ENCODE measurements at regions of chr7 and their contacts with region 1.

Region 1: GRCh38 chr7:151028131-151028947 is at the start of gene ABCB8:
- DNase-seq: peak; percentile 96 to 99 (median 98)
- ATAC-seq: peak; percentile 96 to 98 (median 96)
- H3K4me3 ChIP-seq: peak within 1 kb of the TSS; percentile 62 to 91 (median 76)
- H3K27ac ChIP-seq: peak within 1 kb of the TSS; percentile 15 to 90 (median 85)
- H3K4me1 ChIP-seq: peaks cover 0 to 22% (median 15%) of the 10 kb centered on the region in 12 donors
- H3K27me3 ChIP-seq: peaks cover 0 to 4% (median 0%) of the 10 kb centered on the region in 9 donors
- CTCF ChIP-seq: peak; percentile 43 to 77 (median 60)
- POLR2A ChIP-seq: peak in 1 of 2 donors; percentile 74
- total RNA-seq, gene ABCB8: 13.6 to 34.5 (median 26.0) TPM

Region 2: GRCh38 chr7:151085691-151086620 is 57.6 kb after region 1 on chr7 and contains the start of gene AGAP3:
- intact Hi-C with region 1: loop called in 3 of 10 experiments (anchors 2 to 10 kb)
- DNase-seq: peak; percentile 91 to 94 (median 92)
- ATAC-seq: peak; percentile 53 to 69 (median 61)
- H3K4me3 ChIP-seq: peak within 1 kb of the TSS; percentile 60 to 96 (median 81)
- H3K27ac ChIP-seq: peak within 1 kb of the TSS; percentile 85 to 95 (median 92)
- H3K4me1 ChIP-seq: peaks cover 14 to 77% (median 63%) of the 10 kb centered on the region in 12 donors
- H3K27me3 ChIP-seq: no peaks in the 10 kb centered on the region
- CTCF ChIP-seq: no peak
- POLR2A ChIP-seq: peak in 1 of 2 donors; percentile 75
- total RNA-seq, gene AGAP3: 30.3 to 83.7 (median 57.6) TPM

Region 3: DNA sequence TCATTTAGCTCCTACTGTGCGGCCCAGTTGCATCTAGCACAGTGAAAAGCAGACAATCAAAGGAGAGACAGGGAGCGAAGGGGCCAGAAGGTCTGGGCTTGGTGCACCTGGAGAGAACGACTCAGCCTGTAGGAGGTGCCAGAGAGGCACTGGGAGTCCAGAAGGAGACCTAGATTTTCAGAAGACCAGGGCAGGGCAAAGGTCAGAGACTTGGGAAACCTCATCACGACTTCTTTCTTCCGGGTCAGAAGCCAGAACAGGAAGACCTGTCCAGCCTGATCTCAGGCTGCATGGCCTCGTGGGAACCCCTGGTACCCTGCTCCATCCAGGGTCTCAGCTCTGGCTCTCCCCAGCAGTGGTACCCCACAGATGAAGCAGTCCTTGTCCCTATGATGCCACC is 63.1 kb after region 1 on chr7:
- intact Hi-C with region 1: loop called in 3 of 10 experiments (anchors 2 to 10 kb)
- DNase-seq: no peak
- ATAC-seq: no peak
- H3K4me3 ChIP-seq: no peak overlapping the region
- H3K27ac ChIP-seq: peak overlapping the region in 1 of 12 donors; percentile 91
- H3K4me1 ChIP-seq: peaks cover 0 to 64% (median 49%) of the 10 kb centered on the region in 12 donors
- H3K27me3 ChIP-seq: no peaks in the 10 kb centered on the region
- CTCF ChIP-seq: peak in 11 of 12 donors; percentile 16 to 54 (median 39)
- POLR2A ChIP-seq: no peak